ENCODE measurements at regions of chr1 and their contacts with region 1.

Region 1: DNA sequence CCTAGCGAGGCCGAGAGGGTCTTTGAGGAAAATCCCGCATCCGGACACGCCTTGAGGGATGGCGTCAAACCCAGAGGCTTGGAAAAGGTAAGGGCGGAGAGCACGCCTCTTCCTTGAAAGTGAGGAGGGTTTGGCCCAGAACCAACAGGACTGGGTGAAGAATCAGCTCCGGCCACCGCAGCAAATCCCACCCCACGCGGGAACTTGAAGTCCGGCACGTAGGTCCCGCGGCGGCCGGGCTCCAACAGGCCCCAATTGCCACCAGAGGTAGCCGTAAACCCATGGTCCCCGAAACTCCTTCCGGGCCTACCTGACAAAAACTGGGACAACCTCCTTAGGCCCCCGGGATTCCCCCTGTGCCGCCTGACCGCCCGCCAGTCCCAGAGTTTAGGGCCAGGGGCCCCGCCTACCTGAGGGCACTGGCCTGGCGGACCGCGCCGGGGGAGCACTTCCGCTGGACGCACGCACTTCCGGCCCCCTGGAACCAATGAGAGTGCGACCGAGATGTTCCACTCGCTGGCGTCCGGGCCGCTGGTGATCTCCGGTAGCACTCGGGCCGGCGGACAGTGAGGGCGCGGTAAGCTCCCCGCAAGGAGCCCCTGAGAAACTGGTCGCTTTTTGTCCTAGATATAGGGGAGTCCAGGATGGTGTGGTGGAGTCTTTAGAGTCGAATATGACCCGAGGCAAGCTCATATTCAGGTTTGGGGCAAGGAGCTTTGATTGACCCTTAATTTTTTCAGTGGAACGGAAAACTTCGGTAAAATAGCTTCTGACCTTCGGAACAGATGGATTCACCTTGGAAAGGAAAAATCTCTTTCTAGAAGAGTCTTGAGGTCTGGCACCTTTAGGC is at the starts of genes LZIC and NMNAT1:
- DNase-seq: peak; percentile 77
- ATAC-seq: peak; percentile 97
- H3K4me3 ChIP-seq: peak within 1 kb of the TSS; percentile 98
- H3K27ac ChIP-seq: peak within 1 kb of the TSS; percentile 93
- H3K4me1 ChIP-seq: peaks cover 6% of the 10 kb centered on the region; the same call in 1 of the 2 replicates
- H3K27me3 ChIP-seq: no peaks in the 10 kb centered on the region
- CTCF ChIP-seq: peak in 1 of 3 experiments; percentile 29; a peak in 1 of 6 replicates
- EP300 ChIP-seq: no peak
- POLR2A ChIP-seq: peak; percentile 95
- RAD21 ChIP-seq: peak; percentile 15; the same call in 1 of the 2 replicates
- polyA plus RNA-seq, gene LZIC: 21.8 to 24.9 TPM
- polyA plus RNA-seq, gene NMNAT1: 12.7 to 13.0 TPM

Region 2: DNA sequence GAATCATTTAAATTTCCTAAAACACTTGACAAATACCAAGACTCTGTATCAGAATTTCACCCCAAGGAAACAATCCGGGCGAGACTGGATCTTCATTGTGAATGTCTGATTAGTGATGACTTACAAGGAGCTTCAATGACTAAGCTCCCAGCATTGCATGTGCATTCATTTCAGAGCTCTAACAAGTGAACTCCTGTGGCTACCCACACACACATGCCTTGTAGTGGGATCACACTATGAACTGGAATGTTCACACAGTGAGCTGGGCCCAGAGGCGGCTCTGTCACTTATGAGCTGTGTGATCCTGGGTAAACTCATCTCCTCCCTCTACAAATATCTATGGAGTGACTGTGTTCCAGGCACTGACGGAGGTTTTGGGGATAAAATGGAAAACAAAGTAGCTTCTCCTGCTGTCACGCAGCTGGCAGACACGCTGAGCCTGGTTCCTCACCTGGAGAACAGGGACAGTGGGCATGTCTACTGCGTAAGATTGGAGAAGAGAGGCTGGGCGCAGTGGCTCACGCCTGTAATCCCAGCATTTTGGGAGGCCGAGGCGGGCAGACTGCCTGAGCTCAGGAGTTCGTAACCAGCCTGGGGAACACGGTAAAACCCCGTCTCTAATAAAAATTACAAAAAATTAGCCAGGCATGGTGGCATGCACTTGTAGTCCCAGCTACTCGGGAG is 176.3 kb before region 1 on chr1:
- CTCF ChIA-PET with region 1: no interaction called
- POLR2A ChIA-PET with region 1: no interaction called
- RAD21 ChIA-PET with region 1: no interaction called
- SMC1A ChIA-PET with region 1: no interaction called
- in situ Hi-C with region 1: no loop called
- intact Hi-C with region 1: no loop called
- DNase-seq: no peak
- ATAC-seq: no peak
- H3K4me3 ChIP-seq: no peak overlapping the region
- H3K27ac ChIP-seq: no peak overlapping the region
- H3K4me1 ChIP-seq: no peaks in the 10 kb centered on the region
- H3K27me3 ChIP-seq: no peaks in the 10 kb centered on the region
- CTCF ChIP-seq: no peak
- EP300 ChIP-seq: no peak
- POLR2A ChIP-seq: no peak
- RAD21 ChIP-seq: no peak

Region 3: DNA sequence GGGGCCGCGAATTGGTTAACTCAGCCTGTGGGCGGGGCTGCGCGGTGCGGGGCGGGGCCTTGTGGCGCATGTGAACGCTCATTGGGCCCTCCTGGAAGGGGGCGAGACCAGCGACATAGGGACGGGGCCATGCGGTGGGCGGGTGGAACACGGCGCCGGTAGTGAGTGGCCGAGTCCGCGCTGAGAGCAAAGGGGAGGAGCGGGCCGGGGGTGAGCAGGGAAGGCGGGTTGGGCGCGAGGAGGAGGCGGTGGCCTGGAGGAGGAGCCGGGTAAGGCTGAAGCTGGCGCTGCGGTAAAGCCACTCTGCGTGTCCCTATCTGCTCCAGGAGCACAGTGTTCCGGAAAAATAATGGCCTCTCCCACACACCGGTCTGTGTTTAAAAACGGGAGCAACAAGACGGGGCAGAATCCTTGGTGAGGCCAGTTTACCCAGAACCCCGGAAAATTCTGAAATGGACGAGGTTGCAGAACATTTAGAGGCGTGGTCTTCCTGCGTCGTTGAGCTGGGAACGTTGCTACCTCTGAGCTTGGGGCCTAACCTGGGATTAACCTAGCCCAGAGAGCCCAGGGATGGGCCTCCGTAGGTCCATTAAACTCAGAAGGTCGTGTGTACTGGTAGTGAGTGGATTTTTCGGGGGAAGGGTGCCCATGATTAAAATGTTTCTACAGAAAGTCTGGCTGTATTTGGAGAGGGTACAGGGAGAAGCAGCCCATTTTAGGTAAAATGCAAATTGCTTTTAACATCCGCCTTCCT is 32.6 kb before region 1 on chr1:
- CTCF ChIA-PET with region 1: interaction called, 10 read pairs
- POLR2A ChIA-PET with region 1: interaction called, 5 read pairs
- RAD21 ChIA-PET with region 1: interaction called, 13 read pairs
- SMC1A ChIA-PET with region 1: interaction called, 4 read pairs
- in situ Hi-C with region 1: no loop called
- intact Hi-C with region 1: loop called (anchors 2 kb)
- DNase-seq: peak; percentile 93
- ATAC-seq: peak; percentile 98
- H3K4me3 ChIP-seq: peak overlapping the region; percentile 79
- H3K27ac ChIP-seq: peak overlapping the region; percentile 85
- H3K4me1 ChIP-seq: peaks cover 8% of the 10 kb centered on the region
- H3K27me3 ChIP-seq: no peaks in the 10 kb centered on the region
- CTCF ChIP-seq: no peak
- EP300 ChIP-seq: no peak
- POLR2A ChIP-seq: peak; percentile 76
- RAD21 ChIP-seq: no peak

Region 4: DNA sequence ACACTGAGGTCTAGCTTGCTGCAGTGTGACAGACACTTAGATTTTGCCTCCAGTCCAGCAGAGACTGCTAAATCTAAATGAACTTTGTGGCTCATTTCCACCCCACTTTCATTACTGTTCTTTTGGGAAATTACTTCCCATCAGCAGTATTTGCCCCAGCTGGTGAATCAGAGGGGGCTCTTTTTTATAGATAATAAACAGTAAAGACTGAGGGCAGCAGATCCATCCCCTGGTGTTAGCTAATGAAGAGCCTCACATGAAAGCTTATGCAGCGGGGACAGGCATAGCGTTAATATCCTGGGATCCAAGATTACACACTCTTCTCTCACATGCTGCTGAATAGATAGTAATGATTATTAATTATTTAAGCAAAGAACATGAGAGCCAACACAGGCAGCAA is 26.7 kb before region 1 on chr1:
- CTCF ChIA-PET with region 1: interaction called, 10 read pairs
- POLR2A ChIA-PET with region 1: no interaction called
- RAD21 ChIA-PET with region 1: no interaction called
- SMC1A ChIA-PET with region 1: no interaction called
- in situ Hi-C with region 1: no loop called
- intact Hi-C with region 1: loop called (anchors 2 kb)
- DNase-seq: no peak
- ATAC-seq: no peak
- H3K4me3 ChIP-seq: no peak overlapping the region
- H3K27ac ChIP-seq: no peak overlapping the region
- H3K4me1 ChIP-seq: peaks cover under 1% of the 10 kb centered on the region; the same call in 1 of the 2 replicates
- H3K27me3 ChIP-seq: no peaks in the 10 kb centered on the region
- CTCF ChIP-seq: no peak
- EP300 ChIP-seq: no peak
- POLR2A ChIP-seq: no peak
- RAD21 ChIP-seq: no peak

Region 5: GRCh38 chr1:10032590-10033358 is 89.6 kb after region 1 on chr1 and contains the start of gene UBE4B:
- CTCF ChIA-PET with region 1: interaction called, 6 read pairs
- POLR2A ChIA-PET with region 1: interaction called, 3 read pairs
- RAD21 ChIA-PET with region 1: no interaction called
- SMC1A ChIA-PET with region 1: interaction called, 3 read pairs
- in situ Hi-C with region 1: no loop called
- intact Hi-C with region 1: loop called (anchors 1 kb)
- DNase-seq: peak; percentile 83
- ATAC-seq: peak; percentile 98
- H3K4me3 ChIP-seq: peak within 1 kb of the TSS; percentile 99
- H3K27ac ChIP-seq: peak within 1 kb of the TSS; percentile 79
- H3K4me1 ChIP-seq: no peaks in the 10 kb centered on the region
- H3K27me3 ChIP-seq: no peaks in the 10 kb centered on the region
- CTCF ChIP-seq: peak; percentile 78 to 97 (median 90); a peak in 5 of 6 replicates
- EP300 ChIP-seq: peak in 1 of 2 experiments; percentile 23; a peak in 1 of 4 replicates
- POLR2A ChIP-seq: peak; percentile 62; the same call in 1 of the 2 replicates
- RAD21 ChIP-seq: peak; percentile 63
- polyA plus RNA-seq, gene UBE4B: 2.9 to 7.4 TPM

Measured in GM12878 (cell line).